Right lobe of liver (tissue), 6 donors: ENCODE measurements at regions of chr20 and their contacts with region 1.

Region 1: GRCh38 chr20:25294459-25295385 is 46.8 kb downstream of the PYGB start:
- DNase-seq: peak in 1 of 3 donors; percentile 58
- ATAC-seq: peak; percentile 65 to 75 (median 70)
- H3K4me3 ChIP-seq: no peak overlapping the region
- H3K27ac ChIP-seq: no peak overlapping the region
- H3K4me1 ChIP-seq: no peaks in the 10 kb centered on the region
- H3K27me3 ChIP-seq: no peaks in the 10 kb centered on the region
- CTCF ChIP-seq: peak; percentile 59 to 65 (median 61)
- POLR2A ChIP-seq: no peak

Region 2: DNA sequence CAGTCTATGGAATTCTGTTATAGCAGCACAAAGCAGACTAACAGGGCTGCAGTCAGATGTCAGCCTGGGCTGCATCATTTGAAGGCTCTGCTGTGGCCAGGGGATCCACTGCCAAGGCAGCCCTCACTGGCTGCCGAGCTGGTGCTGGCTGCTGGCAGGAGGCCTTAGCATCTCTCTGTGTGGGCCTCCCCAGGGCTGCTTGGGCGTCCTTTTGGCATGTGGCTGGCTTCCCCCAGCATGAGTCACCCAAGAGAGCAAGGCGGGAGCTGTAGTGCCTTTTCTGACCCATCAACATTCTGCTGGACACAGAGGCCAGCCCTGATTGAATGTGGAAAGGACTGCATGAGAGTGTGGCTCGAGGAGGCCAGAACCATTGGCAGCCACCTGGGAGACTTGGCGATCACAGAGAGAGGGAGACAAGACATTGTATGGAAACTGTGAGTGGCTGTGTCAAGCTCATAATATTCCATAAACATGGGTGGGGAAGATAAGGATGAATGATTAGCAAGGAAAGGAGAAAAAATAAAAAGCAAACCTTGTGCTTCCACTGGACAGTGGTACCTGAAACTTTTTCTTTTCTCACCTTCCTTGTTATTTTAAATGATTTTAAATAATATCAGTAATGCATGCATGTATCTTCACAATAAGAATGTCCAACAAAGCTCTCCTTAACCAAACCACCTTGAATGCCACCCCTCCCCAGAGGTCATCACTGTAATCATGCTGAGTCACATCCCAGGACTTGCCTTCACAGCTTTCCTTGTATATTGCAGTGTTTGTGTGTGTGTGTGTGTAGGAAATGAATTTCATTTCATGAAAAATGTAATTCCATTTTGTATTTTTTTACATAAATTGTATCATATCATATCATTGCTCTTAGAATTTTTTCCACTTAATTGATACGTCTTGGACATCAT is 157.8 kb before region 1 on chr20:
- intact Hi-C with region 1: loop called in 1 of 2 experiments (anchors 10 kb)
- DNase-seq: peak in 1 of 3 donors; percentile 53
- ATAC-seq: peak in 3 of 4 donors; percentile 22 to 58 (median 41)
- H3K4me3 ChIP-seq: no peak overlapping the region
- H3K27ac ChIP-seq: no peak overlapping the region
- H3K4me1 ChIP-seq: no peaks in the 10 kb centered on the region
- H3K27me3 ChIP-seq: no peaks in the 10 kb centered on the region
- CTCF ChIP-seq: no peak
- POLR2A ChIP-seq: no peak

Region 3: GRCh38 chr20:25223179-25223661 is 71.5 kb before region 1 on chr20:
- intact Hi-C with region 1: loop called in 1 of 2 experiments (anchors 10 kb)
- DNase-seq: no peak
- ATAC-seq: peak in 1 of 4 donors; percentile 53
- H3K4me3 ChIP-seq: no peak overlapping the region
- H3K27ac ChIP-seq: no peak overlapping the region
- H3K4me1 ChIP-seq: peaks cover 0 to 20% (median 9%) of the 10 kb centered on the region in 4 donors
- H3K27me3 ChIP-seq: no peaks in the 10 kb centered on the region
- CTCF ChIP-seq: no peak
- POLR2A ChIP-seq: no peak

Region 4: GRCh38 chr20:25399037-25399430 is 104.3 kb after region 1 on chr20:
- intact Hi-C with region 1: loop called in 1 of 2 experiments (anchors 5 kb)
- DNase-seq: no peak
- ATAC-seq: peak; percentile 90 to 97 (median 92)
- H3K4me3 ChIP-seq: no peak overlapping the region
- H3K27ac ChIP-seq: no peak overlapping the region
- H3K4me1 ChIP-seq: no peaks in the 10 kb centered on the region
- H3K27me3 ChIP-seq: no peaks in the 10 kb centered on the region
- CTCF ChIP-seq: peak; percentile 60 to 72 (median 66)
- POLR2A ChIP-seq: no peak

Region 5: GRCh38 chr20:25484224-25484846 is 189.6 kb after region 1 on chr20:
- intact Hi-C with region 1: no loop called
- DNase-seq: no peak
- ATAC-seq: no peak
- H3K4me3 ChIP-seq: no peak overlapping the region
- H3K27ac ChIP-seq: no peak overlapping the region
- H3K4me1 ChIP-seq: no peaks in the 10 kb centered on the region
- H3K27me3 ChIP-seq: no peaks in the 10 kb centered on the region
- CTCF ChIP-seq: no peak
- POLR2A ChIP-seq: no peak